ENCODE measurements at regions of chr9 and their contacts with region 1.

Region 1: DNA sequence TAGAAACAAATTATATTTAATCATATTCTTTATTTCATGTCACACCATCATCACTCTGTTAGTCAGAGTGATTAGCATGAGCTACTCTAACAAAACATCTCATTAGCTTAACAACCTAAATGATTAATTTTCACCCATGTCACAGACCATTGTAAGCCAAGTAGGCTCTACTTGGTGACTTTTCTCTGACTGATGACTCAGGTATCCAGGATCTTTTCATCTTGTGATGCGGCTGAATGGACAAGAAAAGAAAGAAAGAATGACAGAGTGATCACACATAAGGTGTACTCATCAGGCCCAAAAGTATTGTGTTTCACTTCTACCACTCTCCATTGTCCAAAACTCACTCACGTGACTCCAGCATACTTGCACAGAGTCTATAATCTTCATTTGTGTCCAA is 299.3 kb downstream of the ANXA1 start:
- DNase-seq: no peak
- H3K4me3 ChIP-seq: no peak overlapping the region
- H3K27ac ChIP-seq: no peak overlapping the region
- H3K4me1 ChIP-seq: no peaks in the 10 kb centered on the region
- H3K27me3 ChIP-seq: no peaks in the 10 kb centered on the region
- CTCF ChIP-seq: no peak

Region 2: GRCh38 chr9:73239570-73240267 is 211.3 kb before region 1 on chr9:
- CTCF ChIA-PET with region 1: no interaction called
- POLR2A ChIA-PET with region 1: no interaction called
- intact Hi-C with region 1: loop called (anchors 10 kb)
- DNase-seq: no peak
- H3K4me3 ChIP-seq: no peak overlapping the region
- H3K27ac ChIP-seq: no peak overlapping the region
- H3K4me1 ChIP-seq: no peaks in the 10 kb centered on the region
- H3K27me3 ChIP-seq: peaks cover 10% of the 10 kb centered on the region
- CTCF ChIP-seq: no peak

Measured in A673 (cell line).